ENCODE measurements at regions of chr18 and their contacts with region 1.

Region 1: GRCh38 chr18:58781627-58782194 is 83.0 kb upstream of the ZNF532 start:
- DNase-seq: peak; percentile 76
- ATAC-seq: peak; percentile 76
- H3K4me3 ChIP-seq: no peak overlapping the region
- H3K27ac ChIP-seq: no peak overlapping the region
- H3K4me1 ChIP-seq: peaks cover 11% of the 10 kb centered on the region
- H3K27me3 ChIP-seq: no peaks in the 10 kb centered on the region
- CTCF ChIP-seq: peak; percentile 91
- POLR2A ChIP-seq: no peak
- RAD21 ChIP-seq: peak; percentile 96

Region 2: GRCh38 chr18:58953627-58954026 is 171.9 kb after region 1 on chr18:
- CTCF ChIA-PET with region 1: no interaction called
- POLR2A ChIA-PET with region 1: no interaction called
- dilution Hi-C with region 1: no loop called
- in situ Hi-C with region 1: no loop called
- intact Hi-C with region 1: loop called (anchors 5 kb)
- DNase-seq: no peak
- ATAC-seq: no peak
- H3K4me3 ChIP-seq: no peak overlapping the region
- H3K27ac ChIP-seq: no peak overlapping the region
- H3K4me1 ChIP-seq: 0 out of 2 replicates have a peak, but pooled peaks cover 2% of the 10 kb centered on the region
- H3K27me3 ChIP-seq: no peaks in the 10 kb centered on the region
- CTCF ChIP-seq: no peak
- POLR2A ChIP-seq: no peak
- RAD21 ChIP-seq: no peak

Region 3: GRCh38 chr18:59056706-59057492 is 275.2 kb after region 1 on chr18:
- CTCF ChIA-PET with region 1: interaction called, 3 read pairs
- POLR2A ChIA-PET with region 1: no interaction called
- dilution Hi-C with region 1: loop called (anchors 25 kb)
- in situ Hi-C with region 1: loop called (anchors 5 kb)
- intact Hi-C with region 1: loop called (anchors 1 kb)
- DNase-seq: peak; percentile 68
- ATAC-seq: peak; percentile 87
- H3K4me3 ChIP-seq: no peak overlapping the region
- H3K27ac ChIP-seq: no peak overlapping the region
- H3K4me1 ChIP-seq: peaks cover 2% of the 10 kb centered on the region; the same call in 1 of the 2 replicates
- H3K27me3 ChIP-seq: no peaks in the 10 kb centered on the region
- CTCF ChIP-seq: peak; percentile 88
- POLR2A ChIP-seq: no peak
- RAD21 ChIP-seq: peak; percentile 96

Region 4: GRCh38 chr18:59070181-59070912 is 288.6 kb after region 1 on chr18:
- CTCF ChIA-PET with region 1: interaction called, 23 read pairs
- POLR2A ChIA-PET with region 1: no interaction called
- dilution Hi-C with region 1: loop called (anchors 25 kb)
- in situ Hi-C with region 1: no loop called
- intact Hi-C with region 1: loop called (anchors 1 kb)
- DNase-seq: peak; percentile 69
- ATAC-seq: peak; percentile 96
- H3K4me3 ChIP-seq: no peak overlapping the region
- H3K27ac ChIP-seq: no peak overlapping the region
- H3K4me1 ChIP-seq: no peaks in the 10 kb centered on the region
- H3K27me3 ChIP-seq: peaks cover 6% of the 10 kb centered on the region
- CTCF ChIP-seq: peak; percentile 87
- POLR2A ChIP-seq: no peak
- RAD21 ChIP-seq: peak; percentile 89